Heart left ventricle (tissue), 16 donors: ENCODE measurements at regions of chr9 and their contacts with region 1.

Region 1: GRCh38 chr9:8140557-8140956 is 341.0 kb upstream of the DMAC1 start:
- DNase-seq: no peak
- ATAC-seq: no peak
- H3K4me3 ChIP-seq: no peak overlapping the region
- H3K27ac ChIP-seq: no peak overlapping the region
- H3K4me1 ChIP-seq: no peaks in the 10 kb centered on the region
- H3K27me3 ChIP-seq: no peaks in the 10 kb centered on the region
- CTCF ChIP-seq: no peak
- POLR2A ChIP-seq: no peak

Region 2: GRCh38 chr9:8085986-8086385 is 54.6 kb before region 1 on chr9:
- intact Hi-C with region 1: loop called in 1 of 10 experiments (anchors 10 kb)
- DNase-seq: no peak
- ATAC-seq: no peak
- H3K4me3 ChIP-seq: no peak overlapping the region
- H3K27ac ChIP-seq: no peak overlapping the region
- H3K4me1 ChIP-seq: no peaks in the 10 kb centered on the region
- H3K27me3 ChIP-seq: no peaks in the 10 kb centered on the region
- CTCF ChIP-seq: no peak
- POLR2A ChIP-seq: no peak

Region 3: GRCh38 chr9:9286001-9286400 is 1145.4 kb after region 1 on chr9:
- intact Hi-C with region 1: no loop called
- DNase-seq: no peak
- ATAC-seq: no peak
- H3K4me3 ChIP-seq: no peak overlapping the region
- H3K27ac ChIP-seq: no peak overlapping the region
- H3K4me1 ChIP-seq: no peaks in the 10 kb centered on the region
- H3K27me3 ChIP-seq: no peaks in the 10 kb centered on the region
- CTCF ChIP-seq: no peak
- POLR2A ChIP-seq: no peak